ENCODE measurements at regions of chr3 and their contacts with region 1.

Region 1: GRCh38 chr3:58177747-58178527 is 32.8 kb downstream of the DNASE1L3 start:
- DNase-seq: no peak
- H3K4me3 ChIP-seq: peak overlapping the region; percentile 38
- H3K27me3 ChIP-seq: no peaks in the 10 kb centered on the region; the same call in 1 of the 2 replicates
- CTCF ChIP-seq: peak; percentile 95

Region 2: GRCh38 chr3:58167431-58168351 is 10.2 kb before region 1 on chr3:
- CTCF ChIA-PET with region 1: interaction called, 65 read pairs
- POLR2A ChIA-PET with region 1: no interaction called
- DNase-seq: no peak
- H3K4me3 ChIP-seq: no peak overlapping the region
- H3K27me3 ChIP-seq: no peaks in the 10 kb centered on the region
- CTCF ChIP-seq: peak; percentile 97

Region 3: GRCh38 chr3:58206406-58207011 is 28.6 kb after region 1 on chr3:
- CTCF ChIA-PET with region 1: interaction called, 11 read pairs
- POLR2A ChIA-PET with region 1: no interaction called
- DNase-seq: peak; percentile 16
- H3K4me3 ChIP-seq: no peak overlapping the region
- H3K27me3 ChIP-seq: peaks cover 3% of the 10 kb centered on the region; the same call in 1 of the 2 replicates
- CTCF ChIP-seq: no peak

Region 4: GRCh38 chr3:58217209-58217811 is 39.4 kb after region 1 on chr3:
- CTCF ChIA-PET with region 1: interaction called, 69 read pairs
- POLR2A ChIA-PET with region 1: no interaction called
- DNase-seq: no peak
- H3K4me3 ChIP-seq: no peak overlapping the region
- H3K27me3 ChIP-seq: peaks cover 3% of the 10 kb centered on the region
- CTCF ChIP-seq: peak; percentile 86

Region 5: DNA sequence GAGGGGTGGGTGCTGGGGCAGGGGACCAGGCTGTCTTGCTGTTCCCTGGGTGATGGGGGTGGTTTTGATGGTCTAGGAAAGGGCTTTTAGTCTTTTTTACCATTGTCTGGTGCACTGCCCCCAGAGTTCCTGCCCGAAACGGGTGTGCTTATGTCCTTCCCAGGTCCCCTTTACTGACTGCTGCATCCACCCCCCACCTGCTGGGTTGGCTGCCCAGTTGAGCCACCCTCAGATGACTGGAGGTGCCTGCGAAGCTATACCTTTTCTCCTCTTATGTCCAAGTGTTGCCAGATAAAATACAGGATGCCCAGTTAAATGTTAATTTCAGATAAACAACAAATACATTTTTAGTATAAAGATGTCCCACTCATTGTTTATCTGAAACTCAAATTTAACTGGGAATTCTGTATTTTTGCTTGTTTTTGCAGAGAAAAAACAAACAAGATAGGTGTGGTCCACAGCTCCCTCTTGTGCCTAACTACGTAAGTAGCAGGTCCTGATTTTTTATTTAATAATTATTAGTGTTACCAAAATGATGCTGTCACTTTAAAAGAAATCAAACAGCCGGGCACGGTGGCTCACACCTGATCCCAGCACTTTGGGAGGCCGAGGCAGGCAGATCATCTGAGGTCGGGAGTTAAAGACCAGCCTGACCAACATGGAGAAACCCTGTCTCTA is 122.0 kb after region 1 on chr3:
- CTCF ChIA-PET with region 1: interaction called, 240 read pairs
- POLR2A ChIA-PET with region 1: no interaction called
- DNase-seq: no peak
- H3K4me3 ChIP-seq: no peak overlapping the region
- H3K27me3 ChIP-seq: peaks cover 5% of the 10 kb centered on the region
- CTCF ChIP-seq: peak; percentile 55

Measured in BJ (cell line).